ENCODE measurements at regions of chr6 and their contacts with region 1.

Region 1: DNA sequence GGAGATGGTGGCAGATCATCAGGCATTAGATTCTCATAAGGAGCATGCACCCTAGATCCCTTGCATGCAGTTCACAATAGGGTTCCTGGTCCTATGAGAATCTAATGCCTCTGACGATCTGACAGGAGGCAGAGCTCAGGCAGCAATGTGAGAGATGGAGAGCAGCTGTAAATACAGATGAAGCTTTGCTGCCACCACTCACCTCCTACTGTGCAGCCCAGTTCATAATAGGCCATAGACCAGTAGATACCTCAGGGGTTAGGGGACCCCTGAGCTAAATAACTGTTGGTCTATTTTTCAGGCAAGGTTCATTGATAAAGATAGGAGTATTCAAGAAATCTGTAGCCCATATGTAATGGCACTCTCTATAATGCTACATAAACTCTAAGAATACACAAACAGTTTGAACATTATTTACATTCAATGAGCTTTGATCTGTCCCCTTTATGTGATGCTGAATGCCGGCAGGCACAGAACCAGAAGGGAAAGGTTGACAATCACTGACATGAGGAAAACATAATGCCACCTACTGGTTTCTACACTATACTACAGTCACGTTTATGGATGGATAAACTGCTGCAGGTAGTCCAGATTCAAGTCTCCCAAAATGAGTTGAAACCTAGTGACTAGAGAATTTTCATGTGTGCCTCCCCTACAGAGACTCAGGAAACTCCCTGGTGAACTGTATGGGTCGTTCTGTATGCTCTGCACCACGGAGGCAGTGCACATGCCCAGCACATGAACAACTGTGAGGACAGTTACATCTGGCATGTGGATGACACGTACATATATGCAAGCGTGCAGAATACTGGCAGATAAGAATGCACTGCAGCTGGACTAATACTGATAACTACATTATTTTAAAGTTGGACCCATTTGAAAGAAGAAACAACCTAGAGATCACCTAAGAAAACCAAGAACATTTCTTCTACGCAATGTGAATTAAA is 72.0 kb downstream of the DST start:
- H3K4me3 ChIP-seq: no peak overlapping the region
- H3K27ac ChIP-seq: no peak overlapping the region
- H3K4me1 ChIP-seq: peaks cover 10% of the 10 kb centered on the region; the same call in 1 of the 2 replicates
- CTCF ChIP-seq: no peak

Region 2: GRCh38 chr6:56246881-56247653 is 323.6 kb before region 1 on chr6 and contains the start of gene COL21A1:
- CTCF ChIA-PET with region 1: no interaction called
- POLR2A ChIA-PET with region 1: no interaction called
- H3K4me3 ChIP-seq: peak within 1 kb of the TSS; percentile 48
- H3K27ac ChIP-seq: peak within 1 kb of the TSS; percentile 44; the same call in 1 of the 2 replicates
- H3K4me1 ChIP-seq: peaks cover 17% of the 10 kb centered on the region
- CTCF ChIP-seq: peak; percentile 78

Region 3: DNA sequence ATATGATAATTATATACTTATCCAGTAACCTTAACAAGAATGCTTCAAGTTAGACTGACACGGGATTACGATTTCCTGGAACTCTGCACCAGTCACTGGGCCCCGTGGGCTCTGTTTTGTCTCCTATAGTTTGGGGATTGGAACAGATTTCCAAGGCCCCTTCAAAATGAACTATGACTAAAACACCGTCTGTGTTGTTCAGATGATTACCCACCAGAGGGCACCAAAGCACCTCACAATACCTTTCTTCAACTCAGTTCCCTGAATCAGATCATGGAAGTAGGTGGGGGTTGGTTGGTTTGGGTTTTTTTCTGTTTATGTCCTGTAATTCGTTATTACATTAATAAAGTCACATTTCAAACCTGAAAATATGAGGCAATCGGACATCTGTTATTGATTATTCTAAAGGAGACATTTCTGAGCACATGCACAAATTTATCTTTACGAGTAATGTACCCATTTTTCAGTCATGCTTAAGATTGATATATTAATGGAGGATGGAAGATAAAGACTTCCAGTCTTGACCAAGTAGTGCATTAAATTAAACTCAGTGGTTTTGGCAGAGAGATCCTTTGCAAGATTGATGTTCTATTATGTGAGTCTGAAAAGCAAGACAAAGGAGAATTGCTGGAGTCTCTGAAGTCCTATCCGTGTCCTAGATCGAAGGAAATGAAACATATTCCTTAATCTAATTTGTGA is 211.3 kb before region 1 on chr6:
- CTCF ChIA-PET with region 1: interaction called, 35 read pairs
- POLR2A ChIA-PET with region 1: no interaction called
- H3K4me3 ChIP-seq: no peak overlapping the region
- H3K27ac ChIP-seq: no peak overlapping the region
- H3K4me1 ChIP-seq: peaks cover 3% of the 10 kb centered on the region; the same call in 1 of the 2 replicates
- CTCF ChIP-seq: peak; percentile 65

Region 4: GRCh38 chr6:56370561-56371211 is 200.0 kb before region 1 on chr6:
- CTCF ChIA-PET with region 1: interaction called, 11 read pairs
- POLR2A ChIA-PET with region 1: no interaction called
- H3K4me3 ChIP-seq: no peak overlapping the region
- H3K27ac ChIP-seq: no peak overlapping the region
- H3K4me1 ChIP-seq: peaks cover 2% of the 10 kb centered on the region
- CTCF ChIP-seq: no peak

Region 5: GRCh38 chr6:56549014-56549413 is 21.7 kb before region 1 on chr6:
- CTCF ChIA-PET with region 1: interaction called, 29 read pairs
- POLR2A ChIA-PET with region 1: no interaction called
- H3K4me3 ChIP-seq: no peak overlapping the region
- H3K27ac ChIP-seq: no peak overlapping the region
- H3K4me1 ChIP-seq: peaks cover 42% of the 10 kb centered on the region
- CTCF ChIP-seq: no peak

Region 6: GRCh38 chr6:56581296-56581925 is 10.7 kb after region 1 on chr6:
- CTCF ChIA-PET with region 1: interaction called, 31 read pairs
- POLR2A ChIA-PET with region 1: no interaction called
- H3K4me3 ChIP-seq: no peak overlapping the region
- H3K27ac ChIP-seq: no peak overlapping the region
- H3K4me1 ChIP-seq: no peaks in the 10 kb centered on the region
- CTCF ChIP-seq: no peak

Region 7: GRCh38 chr6:56624046-56624727 is 53.5 kb after region 1 on chr6:
- CTCF ChIA-PET with region 1: no interaction called
- POLR2A ChIA-PET with region 1: no interaction called
- H3K4me3 ChIP-seq: no peak overlapping the region
- H3K27ac ChIP-seq: no peak overlapping the region
- H3K4me1 ChIP-seq: no peaks in the 10 kb centered on the region
- CTCF ChIP-seq: no peak

Measured in HEK293 (cell line).